ENCODE measurements at regions of chr10 and their contacts with region 1.

Region 1: DNA sequence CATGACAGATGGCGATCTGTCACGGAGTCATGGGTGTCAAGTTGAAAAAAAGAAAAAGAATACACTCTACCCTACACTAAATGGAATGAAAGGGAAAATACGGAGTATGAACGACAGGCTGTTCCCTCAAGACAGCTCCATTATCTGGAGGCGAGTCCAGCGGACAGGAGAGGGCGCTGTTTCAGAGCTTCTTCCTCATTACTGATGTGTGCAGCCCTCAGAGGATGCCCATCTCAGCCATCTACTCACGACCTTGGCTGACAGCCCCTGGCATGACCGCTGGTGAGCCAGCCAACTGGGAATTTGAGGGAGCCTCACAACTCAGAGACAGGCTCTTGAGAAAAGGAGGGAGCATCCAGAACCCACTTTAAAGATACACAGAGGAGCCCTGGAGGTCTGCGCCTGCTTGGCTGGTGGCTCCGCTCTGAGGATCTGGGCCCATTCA is 49.6 kb upstream of the SMNDC1 start:
- DNase-seq: peak; percentile 76 to 87
- ATAC-seq: peak; percentile 76 to 91 (median 86)
- H3K4me3 ChIP-seq: no peak overlapping the region
- H3K4me3 Mint-ChIP-seq: no peak overlapping the region
- H3K27ac ChIP-seq: no peak overlapping the region
- H3K27ac Mint-ChIP-seq: peak overlapping the region in 1 of 2 donors; percentile 29
- H3K4me1 ChIP-seq: peaks cover 52% of the 10 kb centered on the region
- H3K4me1 Mint-ChIP-seq: peaks cover 13 to 21% of the 10 kb centered on the region in 2 donors
- H3K27me3 ChIP-seq: no peaks in the 10 kb centered on the region
- H3K27me3 Mint-ChIP-seq: peaks cover 8 to 13% of the 10 kb centered on the region in 2 donors
- CTCF ChIP-seq: peak; percentile 93

Region 2: DNA sequence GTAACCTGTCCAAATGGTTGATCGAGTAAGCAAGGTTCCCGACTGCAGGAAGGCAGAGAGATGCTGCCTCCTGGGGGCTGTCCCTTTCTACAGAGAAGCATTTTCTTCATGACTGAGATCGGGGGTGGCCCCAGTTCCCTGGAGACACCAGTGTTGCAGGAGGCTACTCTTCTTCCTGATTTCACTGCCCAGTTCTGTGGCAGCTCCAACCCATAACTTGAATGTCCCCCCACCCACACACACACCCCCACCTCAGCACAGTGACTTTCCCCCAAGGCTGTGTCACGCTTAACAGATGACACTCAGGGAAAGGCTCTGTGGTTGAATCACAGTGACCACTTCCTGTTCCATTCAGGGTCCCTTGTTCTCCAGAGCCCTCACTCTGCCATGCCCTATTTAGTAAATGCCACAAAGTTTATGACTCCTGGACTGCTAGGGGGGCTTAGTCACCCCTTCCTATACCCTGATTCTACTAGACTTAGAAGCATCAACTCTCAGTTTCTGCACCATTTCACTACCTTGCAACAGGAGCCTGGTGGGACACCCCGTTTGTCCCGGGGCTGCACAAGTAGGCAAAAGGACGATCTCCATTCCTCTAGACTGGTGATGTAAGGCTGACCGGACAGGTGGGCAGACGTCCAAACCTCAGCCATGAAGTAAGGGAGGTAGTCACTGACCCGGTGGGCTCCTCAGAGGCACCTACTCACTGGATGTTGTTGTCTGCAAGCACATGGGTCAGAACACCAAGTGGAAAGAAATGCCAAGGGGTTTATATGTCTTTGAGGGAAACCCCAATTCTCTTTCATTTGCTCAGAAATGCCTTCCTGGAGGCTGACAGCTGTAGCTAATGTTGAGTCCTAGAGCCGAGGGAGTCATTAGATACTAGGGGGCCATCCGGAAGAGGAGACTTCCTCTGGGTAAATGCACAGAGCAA is 181.9 kb after region 1 on chr10:
- intact Hi-C with region 1: loop called (anchors 2 kb)
- DNase-seq: peak; percentile 30 to 69
- ATAC-seq: peak; percentile 80 to 87 (median 86)
- H3K4me3 ChIP-seq: no peak overlapping the region
- H3K4me3 Mint-ChIP-seq: peak overlapping the region; percentile 45
- H3K27ac ChIP-seq: no peak overlapping the region
- H3K27ac Mint-ChIP-seq: peak overlapping the region in 1 of 2 donors; percentile 78
- H3K4me1 ChIP-seq: peaks cover 21% of the 10 kb centered on the region
- H3K4me1 Mint-ChIP-seq: peaks cover 19 to 24% of the 10 kb centered on the region in 2 donors
- H3K27me3 ChIP-seq: no peaks in the 10 kb centered on the region
- H3K27me3 Mint-ChIP-seq: peaks cover 0 to 5% of the 10 kb centered on the region in 2 donors
- CTCF ChIP-seq: peak; percentile 26

Region 3: DNA sequence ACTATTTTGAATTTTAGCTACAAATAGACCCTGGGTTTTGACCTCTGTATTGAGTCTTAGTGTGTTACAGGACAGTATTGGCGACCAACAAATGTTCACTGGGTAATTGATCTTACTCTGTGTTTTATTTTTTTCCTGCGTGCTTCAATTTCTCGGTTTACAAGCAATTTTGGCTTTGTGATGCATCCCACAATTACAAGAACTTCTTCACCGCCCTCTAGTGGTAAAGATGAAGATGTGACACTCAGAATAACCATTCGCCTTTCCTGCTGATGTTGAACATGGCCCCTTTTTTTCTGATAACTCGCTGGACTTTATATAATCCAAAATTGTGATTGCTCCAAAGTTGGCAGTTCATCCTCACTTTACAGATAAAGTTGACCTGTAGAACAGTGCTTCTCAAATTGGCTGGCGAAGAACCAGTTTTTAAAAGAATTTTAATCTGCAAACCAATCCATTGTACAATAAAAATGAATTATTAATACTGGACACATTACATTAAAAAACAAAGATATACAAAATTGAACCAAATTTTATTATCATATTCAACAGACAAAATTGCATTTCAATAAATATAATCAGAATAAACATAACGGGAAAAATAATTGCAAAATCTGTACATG is 192.9 kb after region 1 on chr10:
- intact Hi-C with region 1: loop called (anchors 1 kb)
- DNase-seq: peak in 1 of 2 donors; percentile 79
- ATAC-seq: peak; percentile 71 to 91 (median 78)
- H3K4me3 ChIP-seq: no peak overlapping the region
- H3K4me3 Mint-ChIP-seq: no peak overlapping the region
- H3K27ac ChIP-seq: no peak overlapping the region
- H3K27ac Mint-ChIP-seq: no peak overlapping the region
- H3K4me1 ChIP-seq: no peaks in the 10 kb centered on the region
- H3K4me1 Mint-ChIP-seq: peaks cover 4 to 8% of the 10 kb centered on the region in 2 donors
- H3K27me3 ChIP-seq: peaks cover 5% of the 10 kb centered on the region
- H3K27me3 Mint-ChIP-seq: peaks cover 6 to 42% of the 10 kb centered on the region in 2 donors
- CTCF ChIP-seq: peak; percentile 90

Region 4: DNA sequence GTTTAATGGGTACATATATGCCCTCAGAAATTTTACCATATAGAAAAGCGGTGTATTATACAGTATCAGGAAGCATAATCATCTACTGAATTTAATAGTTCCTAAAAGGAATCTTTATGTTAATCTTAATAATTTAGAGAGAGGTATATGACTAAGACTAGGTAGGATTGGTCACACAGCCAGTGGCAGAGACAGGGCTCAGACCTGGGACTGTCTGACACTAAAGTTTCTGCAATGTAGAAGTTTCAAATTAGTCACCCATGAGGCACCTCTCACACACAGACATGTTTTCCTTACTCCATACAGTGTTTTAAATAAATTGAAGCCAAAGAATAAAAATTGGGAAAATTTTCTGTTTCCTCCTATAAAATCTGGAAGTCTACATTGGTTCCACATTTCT is 649.7 kb after region 1 on chr10:
- intact Hi-C with region 1: no loop called
- DNase-seq: no peak
- ATAC-seq: no peak
- H3K4me3 ChIP-seq: no peak overlapping the region
- H3K4me3 Mint-ChIP-seq: no peak overlapping the region
- H3K27ac ChIP-seq: no peak overlapping the region
- H3K27ac Mint-ChIP-seq: peak overlapping the region in 1 of 2 donors; percentile 16
- H3K4me1 ChIP-seq: no peaks in the 10 kb centered on the region
- H3K4me1 Mint-ChIP-seq: peaks cover 4 to 6% of the 10 kb centered on the region in 2 donors
- H3K27me3 ChIP-seq: no peaks in the 10 kb centered on the region
- H3K27me3 Mint-ChIP-seq: no peaks in the 10 kb centered on the region
- CTCF ChIP-seq: no peak